Common myeloid progenitor, CD34-positive (primary cell): ENCODE measurements at regions of chr11 and their contacts with region 1.

Region 1: DNA sequence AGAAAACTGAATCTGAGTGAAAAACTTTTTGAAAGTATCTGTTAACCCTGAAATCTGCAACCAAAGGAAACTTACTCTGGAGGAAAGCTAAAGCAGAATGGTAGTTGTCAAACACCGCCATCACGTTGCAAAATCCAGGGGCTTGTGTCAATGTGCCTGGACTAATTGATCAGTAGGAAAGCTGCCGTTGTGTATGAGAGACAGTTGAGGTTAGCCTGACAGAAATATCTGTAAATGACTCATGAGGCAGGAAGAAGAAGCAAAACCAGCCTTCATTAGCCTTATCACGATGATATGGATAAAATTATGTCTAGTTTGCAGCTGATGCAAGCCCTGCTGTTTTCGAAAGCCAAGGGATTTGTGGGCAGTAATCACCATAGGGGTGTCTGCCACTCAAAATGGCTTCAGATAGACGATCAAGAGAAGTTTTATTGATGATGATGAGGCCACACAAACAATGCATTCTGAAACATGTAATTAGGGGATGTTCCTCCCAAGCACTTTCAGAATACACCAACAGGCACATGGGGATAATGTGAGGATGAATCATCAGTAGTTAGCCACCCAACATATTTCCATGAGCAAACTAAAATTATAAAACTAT is 8.9 kb downstream of the SCGB1A1 start:
- DNase-seq: peak; percentile 43 to 77 (median 57)
- H3K4me3 ChIP-seq: no peak overlapping the region
- H3K27ac ChIP-seq: peak overlapping the region in 1 of 2 experiments; percentile 18
- H3K4me1 ChIP-seq: peaks cover 0 to 43% (median 31%) of the 10 kb centered on the region in 4 experiments
- H3K27me3 ChIP-seq: no peaks in the 10 kb centered on the region

Region 2: GRCh38 chr11:62324738-62325556 is 102.8 kb before region 1 on chr11:
- CTCF ChIA-PET with region 1: no interaction called
- POLR2A ChIA-PET with region 1: no interaction called
- DNase-seq: peak; percentile 73 to 84 (median 82)
- H3K4me3 ChIP-seq: no peak overlapping the region
- H3K27ac ChIP-seq: no peak overlapping the region
- H3K4me1 ChIP-seq: peaks cover 0 to 2% (median 0%) of the 10 kb centered on the region in 4 experiments
- H3K27me3 ChIP-seq: peaks cover 0 to 3% (median 0%) of the 10 kb centered on the region in 5 experiments

Region 3: GRCh38 chr11:62402226-62402959 is 25.3 kb before region 1 on chr11:
- CTCF ChIA-PET with region 1: interaction called, 73 read pairs
- POLR2A ChIA-PET with region 1: interaction called, 5 read pairs
- DNase-seq: peak in 2 of 3 donors; percentile 24 to 50
- H3K4me3 ChIP-seq: peak overlapping the region in 3 of 7 experiments; percentile 33 to 57 (median 41)
- H3K27ac ChIP-seq: no peak overlapping the region
- H3K4me1 ChIP-seq: peaks cover 0 to 50% (median 33%) of the 10 kb centered on the region in 4 experiments
- H3K27me3 ChIP-seq: no peaks in the 10 kb centered on the region

Region 4: GRCh38 chr11:62411524-62411923 is 16.2 kb before region 1 on chr11:
- CTCF ChIA-PET with region 1: interaction called, 12 read pairs
- POLR2A ChIA-PET with region 1: no interaction called
- DNase-seq: no peak
- H3K4me3 ChIP-seq: no peak overlapping the region
- H3K27ac ChIP-seq: no peak overlapping the region
- H3K4me1 ChIP-seq: no peaks in the 10 kb centered on the region
- H3K27me3 ChIP-seq: no peaks in the 10 kb centered on the region

Region 5: DNA sequence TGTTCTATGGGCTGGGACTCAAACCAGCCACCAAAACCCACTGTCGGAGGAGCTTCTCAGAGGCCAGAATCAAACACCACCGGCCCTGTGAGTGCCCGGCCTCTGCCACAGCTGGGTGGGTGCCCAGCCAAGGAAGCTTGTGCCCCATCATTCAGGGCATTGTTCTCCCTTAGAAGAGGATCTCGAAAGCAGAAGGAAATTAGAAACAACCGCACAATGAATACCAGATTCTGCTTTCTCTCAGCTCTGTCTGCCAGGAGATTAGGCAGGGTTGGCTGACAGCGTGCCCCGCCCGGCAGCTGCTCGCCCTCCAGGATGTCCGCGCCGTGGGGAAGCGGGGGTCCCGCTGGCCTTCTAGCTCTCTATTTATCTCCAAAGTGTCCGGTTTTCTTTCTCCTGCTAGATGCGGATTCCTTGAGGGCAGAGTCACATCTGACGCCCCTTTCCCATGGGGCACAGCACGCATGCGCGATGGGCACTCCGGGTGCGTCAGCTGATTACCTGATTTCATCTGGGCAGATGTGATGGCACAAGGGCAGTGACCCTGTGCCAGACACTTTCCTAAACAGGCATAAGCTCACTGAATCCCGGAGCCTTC is 16.6 kb after region 1 on chr11:
- CTCF ChIA-PET with region 1: interaction called, 10 read pairs
- POLR2A ChIA-PET with region 1: interaction called, 3 read pairs
- DNase-seq: peak; percentile 73 to 90 (median 86)
- H3K4me3 ChIP-seq: peak overlapping the region in 5 of 7 experiments; percentile 32 to 75 (median 67)
- H3K27ac ChIP-seq: peak overlapping the region in 1 of 2 experiments; percentile 46
- H3K4me1 ChIP-seq: peaks cover 6 to 27% (median 25%) of the 10 kb centered on the region in 4 experiments
- H3K27me3 ChIP-seq: peaks cover 0 to 3% (median 0%) of the 10 kb centered on the region in 5 experiments

Region 6: GRCh38 chr11:62556108-62556871 is 128.6 kb after region 1 on chr11:
- CTCF ChIA-PET with region 1: interaction called, 94 read pairs
- POLR2A ChIA-PET with region 1: interaction called, 5 read pairs
- DNase-seq: peak; percentile 93 to 99 (median 98)
- H3K4me3 ChIP-seq: peak overlapping the region in 6 of 7 experiments; percentile 4 to 70 (median 52)
- H3K27ac ChIP-seq: peak overlapping the region; percentile 96 to 97
- H3K4me1 ChIP-seq: peaks cover 23 to 93% (median 89%) of the 10 kb centered on the region in 4 experiments
- H3K27me3 ChIP-seq: no peaks in the 10 kb centered on the region